Activated CD4-positive, alpha-beta T cell treated with anti-CD3 and anti-CD28 coated beads, Interleukin-2, amount 10 ng/mL, durations not matched to agents 24 days and 14 days (primary cell): ENCODE measurements at regions of chr22 and their contacts with region 1.

Region 1: GRCh38 chr22:37849089-37849751 is at the start of gene EIF3L:
- DNase-seq: peak; percentile 97
- H3K4me3 Mint-ChIP-seq: peak within 1 kb of the TSS; percentile 98
- H3K27ac Mint-ChIP-seq: peak within 1 kb of the TSS; percentile 97
- H3K4me1 Mint-ChIP-seq: peaks cover 41% of the 10 kb centered on the region
- H3K27me3 Mint-ChIP-seq: no peaks in the 10 kb centered on the region
- total RNA-seq, gene EIF3L: 460 and 480 TPM in 2 replicates

Region 2: GRCh38 chr22:37807410-37808293 is 41.6 kb before region 1 on chr22 and contains the start of gene GCAT:
- intact Hi-C with region 1: loop called (anchors 1 kb)
- DNase-seq: peak; percentile 97
- H3K4me3 Mint-ChIP-seq: peak within 1 kb of the TSS; percentile 94
- H3K27ac Mint-ChIP-seq: peak within 1 kb of the TSS; percentile 15
- H3K4me1 Mint-ChIP-seq: peaks cover 36% of the 10 kb centered on the region
- H3K27me3 Mint-ChIP-seq: peaks cover 23% of the 10 kb centered on the region
- total RNA-seq, gene GCAT: 27.7 and 28.9 TPM in 2 replicates